Common myeloid progenitor, CD34-positive (primary cell): ENCODE measurements at regions of chr14 and their contacts with region 1.

Region 1: DNA sequence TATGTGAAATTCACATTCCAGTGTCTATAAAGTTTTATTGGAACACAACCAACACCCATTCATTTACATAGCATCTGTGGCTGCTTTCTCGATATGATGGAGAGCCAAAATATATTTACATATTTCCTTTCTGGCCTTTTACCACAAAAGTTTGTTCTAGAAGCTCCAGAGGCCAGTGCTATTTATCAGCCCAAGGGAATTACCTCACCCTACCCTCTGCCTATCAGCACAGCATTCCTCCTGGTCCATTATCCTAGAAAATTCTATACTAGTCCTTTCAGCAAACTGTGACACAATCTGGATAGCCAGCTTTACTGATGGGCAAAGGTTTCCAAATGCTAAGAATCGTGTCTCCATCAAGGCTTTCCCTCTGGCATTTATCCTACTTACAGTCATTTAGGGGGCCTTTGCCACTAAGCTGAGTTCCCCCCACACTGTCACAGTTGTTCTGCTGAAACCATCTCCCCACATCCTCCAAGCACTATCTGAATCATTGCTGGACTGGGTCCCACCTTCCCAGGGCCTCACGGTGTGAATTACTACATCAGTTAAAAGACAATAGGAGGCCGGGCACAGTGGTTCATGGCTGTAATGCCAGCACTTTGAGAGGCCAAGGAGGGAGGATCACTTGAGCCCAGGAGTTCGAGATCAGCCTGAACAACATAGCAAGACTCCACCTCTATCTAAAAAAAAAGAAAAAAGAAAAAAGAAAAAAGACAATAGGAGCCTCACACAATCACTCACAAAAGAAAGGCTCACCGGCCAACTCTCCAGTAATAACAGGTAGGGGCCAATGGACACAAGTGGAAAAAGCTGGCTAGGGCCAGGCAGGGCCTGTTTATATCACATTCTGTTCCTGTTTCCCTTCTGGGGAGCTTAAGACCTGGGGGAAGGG is 12.1 kb downstream of the SYNE3 start:
- DNase-seq: no peak
- H3K4me3 ChIP-seq: no peak overlapping the region
- H3K27ac ChIP-seq: no peak overlapping the region
- H3K4me1 ChIP-seq: peaks cover 4 to 51% (median 28%) of the 10 kb centered on the region in 4 experiments
- H3K27me3 ChIP-seq: no peaks in the 10 kb centered on the region

Region 2: GRCh38 chr14:95480109-95480886 is 24.1 kb before region 1 on chr14:
- CTCF ChIA-PET with region 1: no interaction called
- POLR2A ChIA-PET with region 1: no interaction called
- DNase-seq: peak in 2 of 3 donors; percentile 83 to 84
- H3K4me3 ChIP-seq: no peak overlapping the region
- H3K27ac ChIP-seq: no peak overlapping the region
- H3K4me1 ChIP-seq: peaks cover 0 to 8% (median 3%) of the 10 kb centered on the region in 4 experiments
- H3K27me3 ChIP-seq: no peaks in the 10 kb centered on the region

Region 3: DNA sequence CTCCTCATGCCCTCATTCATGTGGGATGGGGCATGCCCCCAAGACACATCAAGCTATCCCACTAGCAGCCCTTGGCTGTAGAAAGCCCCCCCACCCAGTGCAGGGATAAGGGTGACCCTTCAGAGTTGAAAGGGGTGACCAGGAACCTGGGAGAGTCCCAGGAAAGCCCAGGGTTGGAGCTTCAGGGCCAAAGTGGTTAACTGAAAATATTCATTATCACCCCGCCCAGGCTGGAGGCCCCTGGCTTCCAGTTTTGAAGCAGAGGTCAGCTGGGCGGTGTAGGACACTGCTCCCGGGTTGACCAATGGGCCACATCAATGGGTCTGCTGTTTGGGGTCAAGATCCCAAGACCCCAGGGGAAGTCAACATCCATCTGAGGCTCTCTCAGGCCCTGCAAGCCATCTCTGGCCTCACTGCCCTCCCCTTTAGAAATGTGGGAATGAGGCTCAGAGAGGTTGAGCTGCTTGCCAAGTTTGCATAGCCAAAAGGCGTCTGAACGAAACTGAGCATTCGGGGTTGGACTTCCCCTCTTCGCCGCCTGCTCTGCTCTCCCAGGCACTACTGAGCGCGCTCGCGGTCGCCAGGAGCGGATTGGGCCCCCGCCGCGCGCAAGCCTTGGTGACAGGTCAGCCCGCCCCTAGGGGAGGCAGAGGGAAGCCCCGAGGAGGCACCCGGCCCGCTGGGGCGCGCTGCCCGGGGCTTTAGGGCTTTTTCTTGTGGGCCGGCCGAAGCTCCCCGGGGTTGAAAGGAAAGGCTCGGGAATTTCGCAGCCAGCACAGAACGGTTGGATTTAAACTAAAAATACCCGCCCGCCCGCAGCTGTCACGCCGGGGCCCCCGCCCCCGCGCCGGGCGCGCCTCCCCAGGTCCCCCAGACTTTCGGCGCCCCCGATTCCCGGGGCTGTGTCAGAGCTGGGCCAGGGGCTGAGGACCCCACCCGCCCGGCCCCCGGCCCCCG is 11.5 kb after region 1 on chr14:
- CTCF ChIA-PET with region 1: interaction called, 10 read pairs
- POLR2A ChIA-PET with region 1: interaction called, 3 read pairs
- DNase-seq: peak; percentile 87 to 95 (median 92)
- H3K4me3 ChIP-seq: peak overlapping the region in 6 of 7 experiments; percentile 40 to 80 (median 68)
- H3K27ac ChIP-seq: peak overlapping the region in 1 of 2 experiments; percentile 34
- H3K4me1 ChIP-seq: peaks cover 24 to 73% (median 68%) of the 10 kb centered on the region in 4 experiments
- H3K27me3 ChIP-seq: no peaks in the 10 kb centered on the region